Heart left ventricle (tissue), 16 donors: ENCODE measurements at regions of chr2 and their contacts with region 1.

Region 1: GRCh38 chr2:197804049-197804757 is at the start of gene PLCL1:
- DNase-seq: peak; percentile 93 to 97 (median 95)
- ATAC-seq: peak; percentile 94 to 97 (median 96)
- H3K4me3 ChIP-seq: peak within 1 kb of the TSS; percentile 66 to 91 (median 84)
- H3K27ac ChIP-seq: peak within 1 kb of the TSS; percentile 70 to 90 (median 84)
- H3K4me1 ChIP-seq: peaks cover 0 to 35% (median 16%) of the 10 kb centered on the region in 12 donors
- H3K27me3 ChIP-seq: peaks cover 0 to 7% (median 0%) of the 10 kb centered on the region in 9 donors
- CTCF ChIP-seq: peak in 7 of 12 donors; percentile 17 to 42 (median 27)
- POLR2A ChIP-seq: peak; percentile 36 to 98
- total RNA-seq, gene PLCL1: 65.9 to 126 (median 97.6) TPM

Region 2: DNA sequence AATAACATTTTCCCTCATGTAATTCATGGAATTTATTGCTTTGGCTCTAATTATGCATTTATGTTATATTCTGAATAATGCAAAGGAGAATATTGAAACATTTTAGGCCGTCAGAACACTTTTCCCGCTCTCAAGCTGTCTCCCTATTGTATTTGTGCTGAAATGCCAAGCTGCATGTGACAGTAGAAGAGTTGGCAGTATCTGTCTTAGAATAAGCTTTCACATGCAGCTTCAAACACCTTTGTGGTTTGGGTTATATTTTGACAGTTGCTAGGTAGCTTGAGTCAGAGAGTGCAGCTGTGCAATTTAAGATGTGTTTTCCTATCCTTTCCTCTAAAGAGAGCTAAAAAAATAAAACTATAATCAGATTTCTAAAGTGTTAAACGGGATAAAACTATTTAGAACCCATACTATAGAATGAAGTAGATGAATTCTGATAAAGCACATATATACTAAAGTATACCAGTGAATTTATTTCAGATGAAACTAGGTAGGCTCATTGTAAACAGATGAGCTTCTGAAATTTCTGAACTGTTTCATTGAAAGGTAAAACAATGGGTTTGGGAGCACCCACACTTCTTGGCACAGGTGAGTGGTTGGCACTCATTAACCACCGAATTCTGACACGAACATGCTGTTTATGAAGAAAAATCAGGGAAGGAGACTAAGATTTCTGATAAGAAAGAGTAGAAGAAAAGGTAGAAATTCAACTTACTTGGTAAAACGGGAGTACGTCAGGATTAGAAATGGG is 43.6 kb after region 1 on chr2:
- intact Hi-C with region 1: loop called in 2 of 10 experiments (anchors 5 kb)
- DNase-seq: no peak
- ATAC-seq: peak; percentile 60 to 85 (median 74)
- H3K4me3 ChIP-seq: no peak overlapping the region
- H3K27ac ChIP-seq: peak overlapping the region in 8 of 12 donors; percentile 0 to 61 (median 16)
- H3K4me1 ChIP-seq: peaks cover 0 to 60% (median 14%) of the 10 kb centered on the region in 12 donors
- H3K27me3 ChIP-seq: no peaks in the 10 kb centered on the region
- CTCF ChIP-seq: no peak
- POLR2A ChIP-seq: no peak

Region 3: GRCh38 chr2:197889041-197889440 is 84.8 kb after region 1 on chr2:
- intact Hi-C with region 1: loop called in 3 of 10 experiments (anchors 10 kb)
- DNase-seq: no peak
- ATAC-seq: peak in 3 of 4 donors; percentile 33 to 64 (median 36)
- H3K4me3 ChIP-seq: no peak overlapping the region
- H3K27ac ChIP-seq: peak overlapping the region in 5 of 12 donors; percentile 5 to 77 (median 15)
- H3K4me1 ChIP-seq: peaks cover 1 to 60% (median 36%) of the 10 kb centered on the region in 12 donors
- H3K27me3 ChIP-seq: no peaks in the 10 kb centered on the region
- CTCF ChIP-seq: no peak
- POLR2A ChIP-seq: no peak

Region 4: GRCh38 chr2:197952540-197953202 is 148.5 kb after region 1 on chr2:
- intact Hi-C with region 1: loop called in 3 of 10 experiments (anchors 5 to 10 kb)
- DNase-seq: no peak
- ATAC-seq: no peak
- H3K4me3 ChIP-seq: no peak overlapping the region
- H3K27ac ChIP-seq: peak overlapping the region in 3 of 12 donors; percentile 2 to 45 (median 4)
- H3K4me1 ChIP-seq: peaks cover 0 to 60% (median 24%) of the 10 kb centered on the region in 12 donors
- H3K27me3 ChIP-seq: no peaks in the 10 kb centered on the region
- CTCF ChIP-seq: no peak
- POLR2A ChIP-seq: no peak

Region 5: DNA sequence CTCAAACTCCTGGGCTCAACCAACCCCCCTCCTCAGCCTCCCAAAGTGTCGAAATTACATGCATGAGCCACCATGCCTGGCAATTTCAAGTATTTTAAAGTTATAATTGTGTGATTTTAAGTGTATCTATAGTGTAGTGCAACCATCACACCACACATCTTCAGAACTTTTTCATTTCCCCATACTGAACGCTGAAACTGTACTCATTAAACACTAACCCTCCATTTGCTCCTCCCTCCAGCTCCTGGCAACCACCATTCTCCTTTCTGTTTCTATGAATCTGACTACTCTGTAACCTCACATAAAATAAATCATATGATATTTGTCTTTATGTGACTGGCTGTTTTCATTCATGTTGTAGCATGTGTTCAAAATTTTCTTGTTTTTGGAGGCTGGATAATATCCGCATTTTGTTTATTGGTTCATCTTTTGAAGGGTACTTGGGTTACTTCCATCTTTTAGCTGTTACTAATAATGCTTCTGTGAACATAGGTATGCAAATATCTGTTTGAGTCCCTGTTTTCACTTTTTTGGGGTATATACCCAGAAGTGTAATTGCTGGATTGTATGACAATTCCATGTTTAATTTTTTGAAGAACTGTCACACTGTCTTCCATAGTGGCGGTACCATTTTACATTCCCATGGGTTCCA is 188.4 kb after region 1 on chr2:
- intact Hi-C with region 1: loop called in 1 of 10 experiments (anchors 10 kb)
- DNase-seq: no peak
- ATAC-seq: no peak
- H3K4me3 ChIP-seq: no peak overlapping the region
- H3K27ac ChIP-seq: no peak overlapping the region
- H3K4me1 ChIP-seq: peaks cover 0 to 48% (median 24%) of the 10 kb centered on the region in 12 donors
- H3K27me3 ChIP-seq: no peaks in the 10 kb centered on the region
- CTCF ChIP-seq: no peak
- POLR2A ChIP-seq: no peak

Region 6: DNA sequence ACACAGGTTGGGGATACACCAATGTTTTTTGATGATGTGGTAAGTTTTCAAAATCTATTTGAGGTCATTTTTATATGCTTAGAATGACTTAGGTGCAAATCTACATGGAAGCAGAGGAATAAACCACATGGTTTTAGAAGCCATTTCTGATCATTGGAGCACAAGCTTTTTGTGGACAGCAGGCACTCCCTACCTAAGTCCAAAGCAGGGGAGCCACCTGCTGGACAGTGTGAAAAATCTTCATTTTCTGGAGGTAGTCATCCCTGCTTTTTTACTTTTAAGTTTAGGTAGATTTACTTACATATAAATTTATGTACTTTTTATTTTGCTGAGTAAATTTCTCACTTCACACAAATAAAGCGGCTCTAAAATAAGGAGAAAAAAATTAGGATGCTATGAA is 323.4 kb after region 1 on chr2:
- intact Hi-C with region 1: loop called (anchors 1 to 5 kb)
- DNase-seq: peak in 4 of 5 donors; percentile 38 to 60 (median 44)
- ATAC-seq: peak; percentile 66 to 87 (median 78)
- H3K4me3 ChIP-seq: no peak overlapping the region
- H3K27ac ChIP-seq: no peak overlapping the region
- H3K4me1 ChIP-seq: peaks cover 0 to 19% (median 7%) of the 10 kb centered on the region in 12 donors
- H3K27me3 ChIP-seq: no peaks in the 10 kb centered on the region
- CTCF ChIP-seq: peak; percentile 49 to 81 (median 68)
- POLR2A ChIP-seq: no peak